ENCODE measurements at regions of chr1 and their contacts with region 1.

Region 1: GRCh38 chr1:236281654-236282424 is at the start of gene ERO1B:
- DNase-seq: peak; percentile 96 to 99 (median 96)
- H3K4me3 ChIP-seq: peak within 1 kb of the TSS; percentile 80 to 84
- H3K4me3 Mint-ChIP-seq: peak within 1 kb of the TSS; percentile 85 to 98 (median 96)
- H3K27ac ChIP-seq: peak within 1 kb of the TSS; percentile 81
- H3K27ac Mint-ChIP-seq: peak within 1 kb of the TSS; percentile 88 to 98 (median 95)
- H3K4me1 ChIP-seq: peaks cover 34% of the 10 kb centered on the region
- H3K4me1 Mint-ChIP-seq: peaks cover 32 to 61% (median 44%) of the 10 kb centered on the region in 4 donors
- H3K27me3 ChIP-seq: no peaks in the 10 kb centered on the region
- H3K27me3 Mint-ChIP-seq: no peaks in the 10 kb centered on the region
- total RNA-seq, gene ERO1B: 23.0 to 24.5 TPM

Region 2: GRCh38 chr1:234373064-234373958 is 1908.5 kb before region 1 on chr1 and contains the start of gene COA6:
- CTCF ChIA-PET with region 1: no interaction called
- POLR2A ChIA-PET with region 1: no interaction called
- intact Hi-C with region 1: loop called (anchors 5 kb)
- DNase-seq: peak; percentile 90 to 93 (median 92)
- H3K4me3 ChIP-seq: peak within 1 kb of the TSS; percentile 73 to 99
- H3K4me3 Mint-ChIP-seq: peak within 1 kb of the TSS; percentile 93 to 100 (median 97)
- H3K27ac ChIP-seq: peak within 1 kb of the TSS; percentile 87
- H3K27ac Mint-ChIP-seq: peak within 1 kb of the TSS; percentile 97 to 99 (median 99)
- H3K4me1 ChIP-seq: peaks cover 46% of the 10 kb centered on the region
- H3K4me1 Mint-ChIP-seq: peaks cover 37 to 69% (median 48%) of the 10 kb centered on the region in 4 donors
- H3K27me3 ChIP-seq: no peaks in the 10 kb centered on the region
- H3K27me3 Mint-ChIP-seq: no peaks in the 10 kb centered on the region
- total RNA-seq, gene COA6: 18.5 to 21.8 TPM

Region 3: GRCh38 chr1:236142253-236143103 is 139.4 kb before region 1 on chr1 and contains the start of gene GPR137B:
- CTCF ChIA-PET with region 1: no interaction called
- POLR2A ChIA-PET with region 1: no interaction called
- intact Hi-C with region 1: loop called (anchors 1 kb)
- DNase-seq: peak; percentile 42 to 62 (median 57)
- H3K4me3 ChIP-seq: peak within 1 kb of the TSS; percentile 61 to 88
- H3K4me3 Mint-ChIP-seq: peak within 1 kb of the TSS; percentile 94 to 100 (median 97)
- H3K27ac ChIP-seq: peak within 1 kb of the TSS; percentile 29
- H3K27ac Mint-ChIP-seq: peak within 1 kb of the TSS; percentile 62 to 93 (median 83)
- H3K4me1 ChIP-seq: peaks cover 18% of the 10 kb centered on the region
- H3K4me1 Mint-ChIP-seq: peaks cover 24 to 54% (median 29%) of the 10 kb centered on the region in 4 donors
- H3K27me3 ChIP-seq: no peaks in the 10 kb centered on the region
- H3K27me3 Mint-ChIP-seq: peaks cover 13 to 18% of the 10 kb centered on the region in 2 donors
- total RNA-seq, gene GPR137B: 11.0 to 11.8 TPM

Region 4: DNA sequence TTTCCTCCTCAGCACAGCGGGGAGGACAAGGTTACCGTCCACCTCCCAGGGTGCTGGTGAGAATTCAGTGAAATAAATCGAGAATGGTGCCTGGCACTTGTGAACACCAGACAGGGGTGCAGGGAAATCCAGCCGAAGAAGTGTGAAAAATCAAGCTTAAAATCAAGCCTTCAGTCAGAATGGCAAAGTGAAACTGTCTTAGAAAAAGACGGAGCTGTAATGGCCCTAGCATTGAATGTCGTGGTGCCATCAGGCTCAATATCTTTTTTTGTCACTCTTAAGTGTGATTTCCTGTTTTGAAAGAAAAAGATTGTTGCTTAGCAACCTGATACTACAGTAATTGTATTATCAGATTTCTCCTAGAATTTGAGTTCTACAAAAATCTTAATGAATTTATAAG is 134.3 kb after region 1 on chr1:
- CTCF ChIA-PET with region 1: no interaction called
- POLR2A ChIA-PET with region 1: interaction called, 15 read pairs
- intact Hi-C with region 1: loop called (anchors 5 kb)
- DNase-seq: peak; percentile 73 to 86 (median 82)
- H3K4me3 ChIP-seq: peak overlapping the region; percentile 45 to 49
- H3K4me3 Mint-ChIP-seq: peak overlapping the region; percentile 63 to 89 (median 80)
- H3K27ac ChIP-seq: peak overlapping the region; percentile 83
- H3K27ac Mint-ChIP-seq: peak overlapping the region; percentile 88 to 99 (median 97)
- H3K4me1 ChIP-seq: peaks cover 25% of the 10 kb centered on the region
- H3K4me1 Mint-ChIP-seq: peaks cover 18 to 27% (median 25%) of the 10 kb centered on the region in 4 donors
- H3K27me3 ChIP-seq: no peaks in the 10 kb centered on the region
- H3K27me3 Mint-ChIP-seq: no peaks in the 10 kb centered on the region

Region 5: GRCh38 chr1:236603991-236604904 is 322.4 kb after region 1 on chr1 and contains the start of gene HEATR1:
- CTCF ChIA-PET with region 1: no interaction called
- POLR2A ChIA-PET with region 1: no interaction called
- intact Hi-C with region 1: loop called (anchors 1 kb)
- DNase-seq: peak; percentile 80 to 87 (median 83)
- H3K4me3 ChIP-seq: peak within 1 kb of the TSS; percentile 86 to 99
- H3K4me3 Mint-ChIP-seq: peak within 1 kb of the TSS; percentile 90 to 99 (median 98)
- H3K27ac ChIP-seq: peak within 1 kb of the TSS; percentile 65
- H3K27ac Mint-ChIP-seq: peak within 1 kb of the TSS; percentile 92 to 98 (median 96)
- H3K4me1 ChIP-seq: peaks cover 15% of the 10 kb centered on the region
- H3K4me1 Mint-ChIP-seq: peaks cover 14 to 43% (median 27%) of the 10 kb centered on the region in 4 donors
- H3K27me3 ChIP-seq: peaks cover 4% of the 10 kb centered on the region
- H3K27me3 Mint-ChIP-seq: peaks cover 6 to 7% of the 10 kb centered on the region in 2 donors
- total RNA-seq, gene HEATR1: 44.0 to 57.5 TPM